ENCODE measurements at regions of chr7 and their contacts with region 1.

Region 1: GRCh38 chr7:41705109-41705901 is 2.4 kb upstream of the INHBA start:
- DNase-seq: peak; percentile 67 to 86
- H3K4me3 ChIP-seq: peak overlapping the region; percentile 24
- H3K4me1 ChIP-seq: peaks cover 17% of the 10 kb centered on the region
- H3K27me3 ChIP-seq: peaks cover 7% of the 10 kb centered on the region; the same call in 1 of the 2 replicates

Region 2: DNA sequence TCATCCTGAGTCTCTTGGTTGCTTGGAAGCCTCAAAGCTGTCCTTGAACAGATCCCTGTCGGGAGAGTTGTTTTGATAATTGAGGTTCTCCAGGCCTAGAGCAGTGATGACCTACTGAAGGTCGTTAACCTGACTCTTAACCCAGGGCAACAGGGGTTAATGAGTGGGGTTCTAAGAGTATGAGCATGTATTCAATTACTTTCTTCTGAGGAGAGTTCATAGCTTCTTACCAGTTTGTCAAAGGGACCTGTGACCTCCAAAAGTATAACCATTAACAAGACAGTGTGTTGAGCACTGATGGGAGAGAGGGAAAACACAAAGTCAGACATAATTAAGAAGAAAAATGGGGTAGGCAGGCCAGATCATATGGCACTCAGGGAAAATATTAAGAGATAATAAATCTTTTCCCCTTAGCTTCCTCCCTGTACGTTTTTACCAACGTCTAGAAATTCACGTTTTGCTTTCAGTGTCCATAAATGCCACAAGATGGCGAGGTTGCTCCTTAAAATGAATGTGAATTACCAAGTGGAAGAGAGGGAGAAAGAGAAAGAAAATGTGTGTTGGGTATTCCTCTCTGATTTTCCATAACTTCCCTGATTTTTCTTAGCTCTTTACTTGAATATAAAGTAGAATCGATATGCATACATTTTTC is 1472.9 kb before region 1 on chr7:
- in situ Hi-C with region 1: loop called (anchors 25 kb)
- DNase-seq: peak; percentile 24 to 60
- H3K4me3 ChIP-seq: no peak overlapping the region
- H3K4me1 ChIP-seq: peaks cover 5% of the 10 kb centered on the region; the same call in 1 of the 2 replicates
- H3K27me3 ChIP-seq: no peaks in the 10 kb centered on the region

Region 3: DNA sequence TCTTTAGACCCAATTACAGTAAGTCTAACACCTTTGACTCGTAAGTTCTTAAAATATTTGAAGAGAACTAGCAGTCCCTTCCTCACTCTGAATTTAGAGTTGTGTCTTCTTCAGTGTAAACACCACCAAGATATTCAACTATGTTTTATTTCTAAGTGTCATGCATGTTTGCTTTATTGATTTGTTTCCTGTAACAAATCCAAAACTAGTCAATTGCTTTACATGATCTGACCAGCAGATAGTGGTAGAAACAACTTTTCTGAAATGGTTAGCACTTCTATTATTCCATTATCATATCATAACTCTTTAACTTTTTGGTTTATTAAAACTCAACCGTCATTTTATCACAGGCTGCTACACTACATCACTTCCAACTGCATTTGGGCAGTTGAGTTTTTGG is 92.5 kb before region 1 on chr7:
- in situ Hi-C with region 1: no loop called
- DNase-seq: no peak
- H3K4me3 ChIP-seq: no peak overlapping the region
- H3K4me1 ChIP-seq: no peaks in the 10 kb centered on the region
- H3K27me3 ChIP-seq: no peaks in the 10 kb centered on the region